ENCODE measurements at regions of chr10 and their contacts with region 1.

Region 1: GRCh38 chr10:99435986-99436638 is 5.7 kb upstream of the GOT1 start:
- DNase-seq: peak; percentile 66
- ATAC-seq: peak; percentile 58
- H3K4me3 ChIP-seq: no peak overlapping the region
- H3K4me3 Mint-ChIP-seq: no peak overlapping the region
- H3K27ac ChIP-seq: no peak overlapping the region
- H3K27ac Mint-ChIP-seq: peak overlapping the region; percentile 26
- H3K4me1 ChIP-seq: peaks cover 7 to 8% of the 10 kb centered on the region in 2 donors
- H3K4me1 Mint-ChIP-seq: peaks cover 11% of the 10 kb centered on the region
- H3K27me3 ChIP-seq: no peaks in the 10 kb centered on the region
- H3K27me3 Mint-ChIP-seq: no peaks in the 10 kb centered on the region
- CTCF ChIP-seq: peak; percentile 79

Region 2: GRCh38 chr10:99425204-99425603 is 10.9 kb before region 1 on chr10:
- CTCF ChIA-PET with region 1: interaction called, 22 read pairs
- POLR2A ChIA-PET with region 1: no interaction called
- intact Hi-C with region 1: no loop called
- DNase-seq: no peak
- ATAC-seq: no peak
- H3K4me3 ChIP-seq: no peak overlapping the region
- H3K4me3 Mint-ChIP-seq: no peak overlapping the region
- H3K27ac ChIP-seq: no peak overlapping the region
- H3K27ac Mint-ChIP-seq: no peak overlapping the region
- H3K4me1 ChIP-seq: peaks cover 7 to 10% of the 10 kb centered on the region in 2 donors
- H3K4me1 Mint-ChIP-seq: peaks cover 11% of the 10 kb centered on the region
- H3K27me3 ChIP-seq: no peaks in the 10 kb centered on the region
- H3K27me3 Mint-ChIP-seq: no peaks in the 10 kb centered on the region
- CTCF ChIP-seq: no peak

Region 3: GRCh38 chr10:99460070-99460469 is 24.0 kb after region 1 on chr10:
- CTCF ChIA-PET with region 1: interaction called, 10 read pairs
- POLR2A ChIA-PET with region 1: no interaction called
- intact Hi-C with region 1: no loop called
- DNase-seq: no peak
- ATAC-seq: no peak
- H3K4me3 ChIP-seq: no peak overlapping the region
- H3K4me3 Mint-ChIP-seq: no peak overlapping the region
- H3K27ac ChIP-seq: no peak overlapping the region
- H3K27ac Mint-ChIP-seq: no peak overlapping the region
- H3K4me1 ChIP-seq: no peaks in the 10 kb centered on the region
- H3K4me1 Mint-ChIP-seq: no peaks in the 10 kb centered on the region
- H3K27me3 ChIP-seq: peaks cover 0 to 12% (median 2%) of the 10 kb centered on the region in 4 experiments
- H3K27me3 Mint-ChIP-seq: peaks cover 47% of the 10 kb centered on the region
- CTCF ChIP-seq: no peak

Region 4: DNA sequence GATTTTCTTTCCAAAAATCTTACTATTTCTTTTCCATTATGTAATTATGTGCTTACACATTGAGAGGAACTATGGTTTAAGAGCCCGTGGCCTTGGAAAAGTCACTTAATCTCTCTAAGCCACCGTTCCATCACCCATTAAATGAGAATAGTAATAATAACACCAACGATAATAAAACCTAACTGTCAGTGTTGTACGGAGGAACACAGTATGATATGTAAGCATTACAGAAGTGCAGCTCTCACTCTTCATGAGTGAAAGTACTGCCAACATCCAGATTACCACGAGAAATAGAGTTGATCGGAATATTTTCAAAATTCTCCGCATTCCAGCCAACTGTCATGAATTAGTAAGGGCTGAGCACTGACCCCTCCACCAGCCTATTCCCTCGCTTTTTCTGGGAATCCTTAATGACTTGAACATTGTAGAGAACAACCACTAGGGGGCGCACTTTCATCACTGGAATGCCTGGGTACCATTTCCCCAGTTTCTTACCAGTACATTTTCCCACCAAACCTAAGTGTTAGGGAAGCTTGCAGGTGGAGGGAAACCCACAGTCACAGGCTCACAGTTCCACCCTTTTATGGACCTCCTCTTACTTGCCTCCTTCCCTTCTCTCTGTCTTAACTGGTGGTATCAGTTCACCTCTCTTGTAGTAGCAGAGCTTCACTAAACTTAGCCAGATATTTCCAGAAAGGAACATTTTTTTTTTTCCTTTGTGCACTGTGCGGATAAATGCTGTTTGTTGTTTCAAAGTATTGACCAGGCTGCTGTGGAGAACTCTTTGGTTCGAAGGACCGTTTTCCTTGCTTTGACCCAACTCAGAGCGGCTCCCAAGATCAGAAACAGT is 124.4 kb after region 1 on chr10:
- CTCF ChIA-PET with region 1: interaction called, 31 read pairs
- POLR2A ChIA-PET with region 1: no interaction called
- intact Hi-C with region 1: no loop called
- DNase-seq: peak; percentile 70
- ATAC-seq: no peak
- H3K4me3 ChIP-seq: no peak overlapping the region
- H3K4me3 Mint-ChIP-seq: no peak overlapping the region
- H3K27ac ChIP-seq: no peak overlapping the region
- H3K27ac Mint-ChIP-seq: peak overlapping the region; percentile 39
- H3K4me1 ChIP-seq: peaks cover 8 to 18% of the 10 kb centered on the region in 2 donors
- H3K4me1 Mint-ChIP-seq: peaks cover 23% of the 10 kb centered on the region
- H3K27me3 ChIP-seq: peaks cover 0 to 5% (median 2%) of the 10 kb centered on the region in 4 experiments
- H3K27me3 Mint-ChIP-seq: peaks cover 5% of the 10 kb centered on the region
- CTCF ChIP-seq: peak; percentile 94

Region 5: GRCh38 chr10:99648717-99649116 is 212.6 kb after region 1 on chr10:
- CTCF ChIA-PET with region 1: no interaction called
- POLR2A ChIA-PET with region 1: no interaction called
- intact Hi-C with region 1: no loop called
- DNase-seq: no peak
- ATAC-seq: no peak
- H3K4me3 ChIP-seq: no peak overlapping the region
- H3K4me3 Mint-ChIP-seq: no peak overlapping the region
- H3K27ac ChIP-seq: no peak overlapping the region
- H3K27ac Mint-ChIP-seq: no peak overlapping the region
- H3K4me1 ChIP-seq: no peaks in the 10 kb centered on the region
- H3K4me1 Mint-ChIP-seq: no peaks in the 10 kb centered on the region
- H3K27me3 ChIP-seq: peaks cover 0 to 8% (median 1%) of the 10 kb centered on the region in 4 experiments
- H3K27me3 Mint-ChIP-seq: peaks cover 54% of the 10 kb centered on the region
- CTCF ChIP-seq: no peak

Region 6: DNA sequence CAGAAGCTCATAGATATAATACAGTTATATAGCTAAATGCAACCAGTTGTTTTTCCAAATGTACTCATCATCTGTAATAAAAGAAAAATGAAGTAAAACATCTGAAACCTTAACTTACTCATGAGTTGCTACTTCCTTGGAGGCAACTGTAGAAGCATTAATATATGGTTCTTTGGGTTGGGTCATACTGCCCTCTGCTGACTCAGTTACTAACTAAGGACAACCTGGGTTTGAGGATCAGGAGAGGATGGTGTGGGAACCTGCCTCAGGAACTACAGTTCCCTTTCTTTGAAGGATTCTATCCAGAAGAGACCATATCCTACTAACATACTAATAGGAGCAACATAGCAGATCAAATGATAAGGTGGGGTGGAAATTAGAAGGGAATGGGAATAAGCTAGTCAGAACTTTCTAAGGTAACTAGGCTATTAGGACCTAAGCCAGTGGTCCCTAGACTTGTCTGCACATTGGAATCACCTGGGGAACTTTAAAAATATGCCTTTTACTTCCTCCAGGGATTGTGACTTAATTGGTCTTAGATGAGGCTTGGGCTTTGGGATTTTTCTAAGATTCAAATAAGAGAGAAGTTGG is 275.1 kb after region 1 on chr10:
- CTCF ChIA-PET with region 1: interaction called, 32 read pairs
- POLR2A ChIA-PET with region 1: no interaction called
- intact Hi-C with region 1: loop called (anchors 1 kb)
- DNase-seq: peak; percentile 65
- ATAC-seq: peak; percentile 51
- H3K4me3 ChIP-seq: no peak overlapping the region
- H3K4me3 Mint-ChIP-seq: no peak overlapping the region
- H3K27ac ChIP-seq: no peak overlapping the region
- H3K27ac Mint-ChIP-seq: no peak overlapping the region
- H3K4me1 ChIP-seq: no peaks in the 10 kb centered on the region
- H3K4me1 Mint-ChIP-seq: no peaks in the 10 kb centered on the region
- H3K27me3 ChIP-seq: no peaks in the 10 kb centered on the region
- H3K27me3 Mint-ChIP-seq: no peaks in the 10 kb centered on the region
- CTCF ChIP-seq: peak; percentile 70